CD4-positive, alpha-beta T cell (primary cell): ENCODE measurements at regions of chr20 and their contacts with region 1.

Region 1: GRCh38 chr20:51512645-51513044 is 29.9 kb downstream of the NFATC2 start:
- DNase-seq: peak in 3 of 14 experiments; percentile 47 to 58 (median 56)
- ATAC-seq: peak; percentile 85
- H3K4me3 ChIP-seq: no peak overlapping the region
- H3K4me3 Mint-ChIP-seq: peak overlapping the region; percentile 43
- H3K27ac ChIP-seq: peak overlapping the region; percentile 32 to 35
- H3K27ac Mint-ChIP-seq: peak overlapping the region; percentile 84
- H3K4me1 ChIP-seq: peaks cover 67% of the 10 kb centered on the region
- H3K4me1 Mint-ChIP-seq: peaks cover 89% of the 10 kb centered on the region
- H3K27me3 ChIP-seq: no peaks in the 10 kb centered on the region
- H3K27me3 Mint-ChIP-seq: no peaks in the 10 kb centered on the region
- CTCF ChIP-seq: no peak

Region 2: DNA sequence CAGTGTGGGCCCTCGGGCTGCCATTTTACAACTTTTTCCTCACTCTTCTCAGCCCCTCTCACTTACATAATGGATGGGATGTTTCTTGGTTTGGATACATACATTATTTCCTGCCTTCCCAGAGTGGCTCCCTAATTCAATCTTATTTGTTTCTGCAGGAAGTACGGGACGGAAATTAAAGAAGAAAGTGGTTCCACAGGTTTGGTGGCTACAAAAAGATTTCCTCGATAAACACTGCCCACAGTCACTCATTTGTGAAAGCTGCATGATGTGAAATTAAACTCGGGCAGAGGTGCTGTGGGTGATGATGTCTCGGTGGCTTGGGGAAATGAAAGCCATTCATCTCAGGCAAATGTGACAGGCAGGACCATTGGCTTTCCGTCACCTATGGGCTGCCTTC is 370.2 kb before region 1 on chr20:
- CTCF ChIA-PET with region 1: no interaction called
- POLR2A ChIA-PET with region 1: no interaction called
- intact Hi-C with region 1: no loop called
- DNase-seq: no peak
- ATAC-seq: no peak
- H3K4me3 ChIP-seq: no peak overlapping the region
- H3K4me3 Mint-ChIP-seq: no peak overlapping the region
- H3K27ac ChIP-seq: no peak overlapping the region
- H3K27ac Mint-ChIP-seq: no peak overlapping the region
- H3K4me1 ChIP-seq: no peaks in the 10 kb centered on the region
- H3K4me1 Mint-ChIP-seq: no peaks in the 10 kb centered on the region
- H3K27me3 ChIP-seq: peaks cover 3 to 20% of the 10 kb centered on the region in 2 experiments
- H3K27me3 Mint-ChIP-seq: peaks cover 39% of the 10 kb centered on the region
- CTCF ChIP-seq: no peak

Region 3: DNA sequence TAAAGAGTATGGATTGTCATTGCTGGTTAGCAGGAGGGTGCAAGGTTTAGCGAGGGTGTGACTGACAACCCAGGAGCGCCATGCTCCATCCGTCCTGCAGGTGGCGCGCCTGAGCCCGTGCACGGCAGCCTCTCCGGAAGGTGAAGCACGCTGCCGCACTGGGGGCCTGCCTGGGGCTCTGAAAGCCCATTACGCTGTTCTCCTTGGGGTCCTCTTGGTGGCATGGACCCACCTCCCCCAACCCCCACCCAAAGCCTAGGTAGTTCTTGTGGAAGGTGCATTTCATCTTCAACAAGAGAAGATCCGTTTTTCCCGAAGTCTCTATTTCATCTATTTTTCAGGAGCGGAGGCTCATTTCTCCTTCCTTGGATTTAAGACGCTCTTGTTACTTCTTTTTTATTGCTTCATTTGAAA is 292.3 kb before region 1 on chr20:
- CTCF ChIA-PET with region 1: no interaction called
- POLR2A ChIA-PET with region 1: no interaction called
- intact Hi-C with region 1: no loop called
- DNase-seq: peak in 13 of 14 experiments; percentile 19 to 62 (median 34)
- ATAC-seq: peak; percentile 48
- H3K4me3 ChIP-seq: no peak overlapping the region
- H3K4me3 Mint-ChIP-seq: no peak overlapping the region
- H3K27ac ChIP-seq: no peak overlapping the region
- H3K27ac Mint-ChIP-seq: no peak overlapping the region
- H3K4me1 ChIP-seq: peaks cover 5% of the 10 kb centered on the region
- H3K4me1 Mint-ChIP-seq: peaks cover 4% of the 10 kb centered on the region
- H3K27me3 ChIP-seq: peaks cover 26 to 33% of the 10 kb centered on the region in 2 experiments
- H3K27me3 Mint-ChIP-seq: peaks cover 70% of the 10 kb centered on the region
- CTCF ChIP-seq: peak; percentile 73

Region 4: GRCh38 chr20:51469578-51470498 is 42.8 kb before region 1 on chr20:
- CTCF ChIA-PET with region 1: no interaction called
- POLR2A ChIA-PET with region 1: interaction called, 3 read pairs
- intact Hi-C with region 1: loop called in 1 of 2 experiments (anchors 5 kb)
- DNase-seq: no peak
- ATAC-seq: no peak
- H3K4me3 ChIP-seq: no peak overlapping the region
- H3K4me3 Mint-ChIP-seq: no peak overlapping the region
- H3K27ac ChIP-seq: no peak overlapping the region
- H3K27ac Mint-ChIP-seq: peak overlapping the region; percentile 85
- H3K4me1 ChIP-seq: peaks cover 19% of the 10 kb centered on the region
- H3K4me1 Mint-ChIP-seq: peaks cover 34% of the 10 kb centered on the region
- H3K27me3 ChIP-seq: no peaks in the 10 kb centered on the region
- H3K27me3 Mint-ChIP-seq: no peaks in the 10 kb centered on the region
- CTCF ChIP-seq: no peak

Region 5: DNA sequence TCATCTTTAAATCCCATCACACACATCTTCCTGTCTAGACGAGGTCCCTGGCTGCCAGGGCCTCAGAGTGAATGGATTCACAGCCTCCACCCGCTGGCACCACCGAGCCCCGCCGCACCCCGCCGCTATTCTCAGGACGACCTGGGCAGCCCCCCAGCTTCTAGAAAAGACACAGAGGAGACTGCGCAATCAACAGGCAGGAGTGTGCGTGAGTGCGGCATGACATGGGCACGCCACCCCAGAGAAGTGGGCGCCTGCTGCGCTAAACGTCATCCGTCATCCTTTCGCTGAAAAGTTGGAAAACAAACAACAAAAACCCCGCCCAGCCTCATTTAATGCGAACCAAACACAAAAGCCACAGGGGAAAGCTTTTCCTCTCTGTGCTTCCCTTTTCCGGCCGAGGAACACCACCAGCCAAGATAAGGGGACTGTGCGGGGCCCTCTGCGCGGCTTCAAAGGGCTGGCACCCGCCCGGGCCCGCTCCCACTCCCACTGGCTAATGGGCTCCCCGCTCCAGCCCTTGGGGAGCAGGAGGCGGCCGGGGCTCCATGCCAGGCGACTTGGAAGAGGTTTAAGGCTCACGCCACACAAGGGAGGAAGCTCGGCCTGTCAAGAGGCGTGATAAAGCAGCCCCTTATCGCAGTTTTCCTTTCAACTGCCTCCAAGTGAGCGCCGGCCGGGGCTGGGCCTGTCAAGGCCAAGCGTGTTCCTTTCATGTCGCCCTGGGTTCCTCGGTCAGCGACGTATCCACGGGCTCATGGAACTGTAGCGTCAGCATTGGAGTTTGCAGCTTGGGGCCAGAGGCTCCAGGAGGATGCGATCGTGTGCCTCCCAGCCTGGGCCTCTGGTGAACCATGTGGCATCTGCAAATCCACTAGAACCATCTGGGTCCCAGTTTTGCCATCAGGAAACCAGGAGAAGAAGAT is 20.2 kb before region 1 on chr20:
- CTCF ChIA-PET with region 1: no interaction called
- POLR2A ChIA-PET with region 1: interaction called, 87 read pairs
- intact Hi-C with region 1: no loop called
- DNase-seq: peak in 1 of 14 experiments; percentile 33
- ATAC-seq: no peak
- H3K4me3 ChIP-seq: no peak overlapping the region
- H3K4me3 Mint-ChIP-seq: peak overlapping the region; percentile 23
- H3K27ac ChIP-seq: no peak overlapping the region
- H3K27ac Mint-ChIP-seq: peak overlapping the region; percentile 97
- H3K4me1 ChIP-seq: peaks cover 84% of the 10 kb centered on the region
- H3K4me1 Mint-ChIP-seq: peaks cover 84% of the 10 kb centered on the region
- H3K27me3 ChIP-seq: no peaks in the 10 kb centered on the region
- H3K27me3 Mint-ChIP-seq: no peaks in the 10 kb centered on the region
- CTCF ChIP-seq: no peak

Region 6: DNA sequence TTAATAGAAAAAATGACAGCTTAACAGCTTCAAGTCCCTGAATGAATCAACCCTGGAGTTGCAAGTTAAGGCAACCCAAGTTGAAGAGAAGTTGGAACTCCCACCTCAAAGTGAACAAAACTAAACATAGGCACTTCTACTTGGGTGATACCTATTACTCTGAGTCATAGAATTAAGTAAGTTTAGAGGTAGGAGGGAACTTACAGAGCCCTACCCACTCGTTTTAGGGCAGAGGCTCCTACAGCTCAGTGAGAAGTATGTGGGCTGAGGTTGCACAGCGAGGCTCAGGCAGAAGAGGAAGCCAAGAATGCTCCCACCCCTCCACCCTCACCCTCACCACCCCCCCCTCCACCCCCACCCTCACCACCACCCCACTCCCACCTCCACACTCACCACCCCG is 12.3 kb before region 1 on chr20:
- CTCF ChIA-PET with region 1: interaction called, 6 read pairs
- POLR2A ChIA-PET with region 1: interaction called, 87 read pairs
- intact Hi-C with region 1: loop called in 1 of 2 experiments (anchors 1 kb)
- DNase-seq: peak in 13 of 14 experiments; percentile 22 to 86 (median 52)
- ATAC-seq: peak; percentile 84
- H3K4me3 ChIP-seq: no peak overlapping the region
- H3K4me3 Mint-ChIP-seq: peak overlapping the region; percentile 63
- H3K27ac ChIP-seq: peak overlapping the region; percentile 39 to 60
- H3K27ac Mint-ChIP-seq: peak overlapping the region; percentile 97
- H3K4me1 ChIP-seq: peaks cover 67% of the 10 kb centered on the region
- H3K4me1 Mint-ChIP-seq: peaks cover 91% of the 10 kb centered on the region
- H3K27me3 ChIP-seq: no peaks in the 10 kb centered on the region
- H3K27me3 Mint-ChIP-seq: no peaks in the 10 kb centered on the region
- CTCF ChIP-seq: no peak

Region 7: GRCh38 chr20:51525241-51526129 is 12.8 kb after region 1 on chr20:
- CTCF ChIA-PET with region 1: no interaction called
- POLR2A ChIA-PET with region 1: interaction called, 10 read pairs
- intact Hi-C with region 1: loop called in 1 of 2 experiments (anchors 2 kb)
- DNase-seq: peak in 8 of 14 experiments; percentile 22 to 78 (median 40)
- ATAC-seq: peak; percentile 32
- H3K4me3 ChIP-seq: peak overlapping the region; percentile 27
- H3K4me3 Mint-ChIP-seq: peak overlapping the region; percentile 77
- H3K27ac ChIP-seq: peak overlapping the region; percentile 44 to 52
- H3K27ac Mint-ChIP-seq: peak overlapping the region; percentile 88
- H3K4me1 ChIP-seq: peaks cover 66% of the 10 kb centered on the region
- H3K4me1 Mint-ChIP-seq: peaks cover 77% of the 10 kb centered on the region
- H3K27me3 ChIP-seq: no peaks in the 10 kb centered on the region
- H3K27me3 Mint-ChIP-seq: no peaks in the 10 kb centered on the region
- CTCF ChIP-seq: no peak

Region 8: GRCh38 chr20:51531141-51531710 is 18.6 kb after region 1 on chr20:
- CTCF ChIA-PET with region 1: no interaction called
- POLR2A ChIA-PET with region 1: interaction called, 10 read pairs
- intact Hi-C with region 1: loop called in 1 of 2 experiments (anchors 2 kb)
- DNase-seq: peak in 13 of 14 experiments; percentile 31 to 88 (median 58)
- ATAC-seq: peak; percentile 70
- H3K4me3 ChIP-seq: no peak overlapping the region
- H3K4me3 Mint-ChIP-seq: peak overlapping the region; percentile 86
- H3K27ac ChIP-seq: peak overlapping the region; percentile 72 to 73
- H3K27ac Mint-ChIP-seq: peak overlapping the region; percentile 93
- H3K4me1 ChIP-seq: peaks cover 95% of the 10 kb centered on the region
- H3K4me1 Mint-ChIP-seq: peaks cover 99% of the 10 kb centered on the region
- H3K27me3 ChIP-seq: no peaks in the 10 kb centered on the region
- H3K27me3 Mint-ChIP-seq: no peaks in the 10 kb centered on the region
- CTCF ChIP-seq: no peak